RWPE1 (cell line): ENCODE measurements at regions of chr5 and their contacts with region 1.

Region 1: GRCh38 chr5:138132543-138132942 is 6.7 kb downstream of the NME5 start:
- DNase-seq: no peak
- H3K27ac ChIP-seq: no peak overlapping the region
- CTCF ChIP-seq: no peak

Region 2: DNA sequence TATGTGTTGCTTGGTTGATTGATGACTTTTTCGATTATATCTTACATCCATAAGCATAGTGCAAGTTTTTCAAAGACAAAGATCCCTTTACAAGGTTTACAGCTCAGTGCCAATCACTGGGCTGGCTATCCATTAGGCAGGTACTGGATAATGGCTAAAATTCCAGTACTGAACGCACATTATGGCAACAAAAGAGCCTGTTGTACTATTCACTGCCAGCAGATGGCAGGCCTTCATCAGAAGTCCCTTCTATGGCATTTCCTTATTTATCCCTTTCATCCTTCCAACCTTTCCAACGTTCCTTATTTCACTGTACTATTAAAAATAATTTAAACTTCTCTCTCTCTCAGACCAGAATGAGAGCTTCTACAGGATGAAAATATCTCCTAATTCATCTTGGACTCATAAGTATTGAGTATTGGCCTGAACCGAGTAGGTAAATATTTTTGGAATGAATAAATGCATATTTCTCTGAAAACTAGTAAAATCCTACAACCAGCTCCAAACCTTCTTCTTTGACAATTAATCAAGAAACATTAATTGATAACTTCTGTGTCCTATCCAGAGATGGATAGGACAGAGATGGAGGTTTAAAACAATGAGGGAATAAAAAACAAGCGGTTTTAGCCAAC is 55.4 kb before region 1 on chr5:
- CTCF ChIA-PET with region 1: interaction called, 25 read pairs
- POLR2A ChIA-PET with region 1: no interaction called
- DNase-seq: peak; percentile 84
- H3K27ac ChIP-seq: no peak overlapping the region
- CTCF ChIP-seq: peak; percentile 94